GM12878 (cell line): ENCODE measurements at regions of chr22 and their contacts with region 1.

Region 1: DNA sequence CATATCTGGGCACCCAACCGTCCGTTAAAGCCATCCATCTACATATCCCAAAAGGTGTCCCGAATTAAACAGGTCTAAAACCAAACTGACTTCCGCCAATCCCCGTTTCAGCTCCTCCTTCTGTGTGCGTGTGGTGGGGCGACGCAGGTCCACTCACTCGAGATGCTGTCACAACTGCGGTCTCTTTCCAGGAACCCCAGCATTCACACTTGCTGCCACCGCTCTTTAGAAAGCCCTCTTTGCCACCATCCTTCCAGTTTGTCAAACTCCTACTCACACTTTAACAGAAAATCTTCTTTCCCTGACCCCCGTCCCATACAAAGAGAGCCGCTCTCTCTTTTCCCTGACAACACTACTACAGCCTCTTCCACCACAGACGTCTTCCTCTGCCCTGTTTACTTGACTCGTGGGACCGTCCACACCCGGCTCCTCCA is 467 bp downstream of the ESS2 start:
- DNase-seq: no peak
- ATAC-seq: peak; percentile 63
- H3K4me3 ChIP-seq: peak overlapping the region; percentile 100
- H3K27ac ChIP-seq: peak overlapping the region; percentile 72
- H3K4me1 ChIP-seq: peaks cover 4% of the 10 kb centered on the region
- H3K27me3 ChIP-seq: peaks cover 0 to 8% of the 10 kb centered on the region in 2 experiments; a peak in 3 of 4 replicates
- CTCF ChIP-seq: no peak
- EP300 ChIP-seq: no peak
- POLR2A ChIP-seq: no peak
- RAD21 ChIP-seq: no peak

Region 2: DNA sequence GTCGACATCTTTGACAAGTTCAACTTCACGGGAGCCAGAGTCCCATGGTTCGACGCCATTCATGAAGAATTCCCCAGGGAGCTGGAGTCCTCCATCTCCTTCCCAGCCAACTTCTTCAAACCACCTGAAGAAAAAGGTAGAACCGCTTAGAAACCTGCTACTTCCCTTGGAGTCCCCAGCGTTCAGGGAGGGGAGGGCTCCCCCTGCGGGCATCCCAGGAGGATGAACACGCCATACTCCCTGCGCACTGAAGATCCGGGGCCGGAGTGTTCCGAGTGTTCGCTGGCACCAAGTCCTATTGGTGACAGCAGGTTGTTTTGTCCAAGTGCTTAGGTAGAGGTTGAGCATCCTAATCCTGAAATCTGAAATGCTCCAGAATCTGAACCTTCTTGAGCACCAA is 156.2 kb before region 1 on chr22:
- CTCF ChIA-PET with region 1: no interaction called
- POLR2A ChIA-PET with region 1: no interaction called
- RAD21 ChIA-PET with region 1: no interaction called
- SMC1A ChIA-PET with region 1: no interaction called
- in situ Hi-C with region 1: no loop called
- intact Hi-C with region 1: no loop called
- DNase-seq: no peak
- ATAC-seq: no peak
- H3K4me3 ChIP-seq: no peak overlapping the region
- H3K27ac ChIP-seq: no peak overlapping the region
- H3K4me1 ChIP-seq: no peaks in the 10 kb centered on the region
- H3K27me3 ChIP-seq: no peaks in the 10 kb centered on the region
- CTCF ChIP-seq: no peak
- EP300 ChIP-seq: no peak
- POLR2A ChIP-seq: no peak
- RAD21 ChIP-seq: no peak

Region 3: DNA sequence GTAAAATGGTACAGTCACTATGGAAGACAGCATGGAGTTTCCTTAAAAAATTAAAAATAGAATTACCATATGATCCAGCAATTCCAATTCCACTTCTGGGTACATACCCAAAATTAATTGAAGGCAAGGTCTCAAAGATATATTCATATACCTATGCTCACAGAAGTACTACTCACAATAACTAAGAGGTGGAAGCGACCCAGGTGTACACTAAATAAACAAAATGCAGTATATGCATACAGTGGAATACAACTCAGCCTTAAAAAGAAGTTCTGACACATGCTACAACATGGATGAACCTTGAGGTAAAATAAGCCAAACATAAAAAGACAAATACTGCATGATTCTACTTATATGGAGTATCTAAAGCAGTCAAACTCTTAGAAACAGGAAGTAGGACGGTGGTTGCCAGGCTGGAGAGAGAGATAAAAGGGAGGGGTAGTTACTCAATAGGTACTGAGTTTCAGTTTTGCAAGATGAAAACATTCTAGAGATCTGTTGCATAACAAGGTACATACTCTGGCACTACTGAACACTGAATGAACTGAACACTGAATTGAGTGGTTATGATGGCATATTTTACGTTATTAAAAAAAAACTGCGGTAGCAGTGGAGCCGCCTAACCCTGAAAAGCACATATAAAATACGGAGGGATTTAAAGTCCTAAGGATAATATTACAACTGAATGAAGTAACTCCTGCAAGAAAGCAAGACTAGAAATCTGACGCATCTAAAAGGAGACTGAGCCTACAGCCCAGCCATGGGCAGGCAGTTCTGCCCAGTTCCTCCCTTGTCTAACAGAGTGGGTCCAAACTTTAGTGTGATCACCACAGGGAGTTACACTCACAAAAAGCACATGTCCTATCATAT is 34.6 kb before region 1 on chr22:
- CTCF ChIA-PET with region 1: interaction called, 19 read pairs
- POLR2A ChIA-PET with region 1: no interaction called
- RAD21 ChIA-PET with region 1: interaction called, 5 read pairs
- SMC1A ChIA-PET with region 1: no interaction called
- in situ Hi-C with region 1: no loop called
- intact Hi-C with region 1: loop called (anchors 2 kb)
- DNase-seq: peak; percentile 55
- ATAC-seq: peak; percentile 97
- H3K4me3 ChIP-seq: peak overlapping the region; percentile 6; the same call in 1 of the 2 replicates
- H3K27ac ChIP-seq: peak overlapping the region; percentile 38; the same call in 1 of the 2 replicates
- H3K4me1 ChIP-seq: peaks cover 15% of the 10 kb centered on the region
- H3K27me3 ChIP-seq: no peaks in the 10 kb centered on the region
- CTCF ChIP-seq: no peak
- EP300 ChIP-seq: no peak
- POLR2A ChIP-seq: no peak
- RAD21 ChIP-seq: no peak

Region 4: GRCh38 chr22:19115628-19116027 is 28.4 kb before region 1 on chr22:
- CTCF ChIA-PET with region 1: interaction called, 19 read pairs
- POLR2A ChIA-PET with region 1: interaction called, 7 read pairs
- RAD21 ChIA-PET with region 1: interaction called, 10 read pairs
- SMC1A ChIA-PET with region 1: interaction called, 7 read pairs
- in situ Hi-C with region 1: no loop called
- intact Hi-C with region 1: no loop called
- DNase-seq: no peak
- ATAC-seq: peak; percentile 75
- H3K4me3 ChIP-seq: no peak overlapping the region
- H3K27ac ChIP-seq: no peak overlapping the region
- H3K4me1 ChIP-seq: peaks cover 24% of the 10 kb centered on the region
- H3K27me3 ChIP-seq: no peaks in the 10 kb centered on the region
- CTCF ChIP-seq: peak; percentile 36 to 50 (median 46); a peak in 5 of 6 replicates
- EP300 ChIP-seq: no peak
- POLR2A ChIP-seq: no peak
- RAD21 ChIP-seq: no peak; the same call in 1 of the 2 replicates

Region 5: DNA sequence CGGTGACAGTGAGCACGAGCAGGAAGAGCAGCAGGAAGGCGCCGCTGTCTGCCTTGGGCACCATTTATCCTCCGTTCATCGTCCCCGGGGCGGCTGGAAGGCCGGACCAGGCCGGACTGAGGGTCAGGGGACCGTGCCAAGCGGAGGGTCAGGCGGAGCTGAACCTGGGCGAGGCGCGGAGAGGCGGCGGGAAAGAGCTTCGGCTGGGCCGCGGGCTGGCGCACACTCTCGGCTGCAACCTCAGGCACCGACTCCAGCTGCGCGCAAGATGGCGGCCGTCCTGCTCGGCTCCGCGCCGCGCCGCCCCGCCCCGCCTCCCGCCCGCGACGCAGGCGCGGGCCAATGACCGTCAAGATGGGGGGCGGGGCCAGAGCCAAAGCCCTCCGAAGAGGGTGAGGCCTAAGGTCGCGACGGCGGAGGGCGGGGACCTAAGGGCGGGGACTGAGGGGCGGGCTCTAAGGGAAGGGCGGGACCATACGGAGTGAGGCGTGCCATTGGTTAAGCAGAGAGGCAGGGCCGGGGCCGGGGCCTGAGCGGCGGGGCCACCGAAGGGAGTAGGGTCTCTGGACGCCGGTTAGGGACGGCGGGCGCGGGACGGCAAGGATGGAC is 21.7 kb before region 1 on chr22 and contains the start of gene DGCR2:
- CTCF ChIA-PET with region 1: interaction called, 10 read pairs
- POLR2A ChIA-PET with region 1: interaction called, 7 read pairs
- RAD21 ChIA-PET with region 1: interaction called, 10 read pairs
- SMC1A ChIA-PET with region 1: interaction called, 7 read pairs
- in situ Hi-C with region 1: no loop called
- intact Hi-C with region 1: loop called (anchors 1 kb)
- DNase-seq: peak; percentile 66
- ATAC-seq: peak; percentile 97
- H3K4me3 ChIP-seq: peak within 1 kb of the TSS; percentile 95
- H3K27ac ChIP-seq: peak within 1 kb of the TSS; percentile 67
- H3K4me1 ChIP-seq: peaks cover 24% of the 10 kb centered on the region
- H3K27me3 ChIP-seq: no peaks in the 10 kb centered on the region; a peak in 1 of 4 replicates
- CTCF ChIP-seq: no peak
- EP300 ChIP-seq: no peak
- POLR2A ChIP-seq: peak; percentile 91
- RAD21 ChIP-seq: no peak
- polyA plus RNA-seq, gene DGCR2: 0.19 to 0.44 TPM

Region 6: GRCh38 chr22:19432133-19432851 is 288.3 kb after region 1 on chr22 and contains the start of gene MRPL40:
- CTCF ChIA-PET with region 1: interaction called, 3 read pairs
- POLR2A ChIA-PET with region 1: no interaction called
- RAD21 ChIA-PET with region 1: no interaction called
- SMC1A ChIA-PET with region 1: no interaction called
- in situ Hi-C with region 1: no loop called
- intact Hi-C with region 1: loop called (anchors 1 kb)
- DNase-seq: peak; percentile 76
- ATAC-seq: peak; percentile 93
- H3K4me3 ChIP-seq: peak within 1 kb of the TSS; percentile 94
- H3K27ac ChIP-seq: peak within 1 kb of the TSS; percentile 93
- H3K4me1 ChIP-seq: no peaks in the 10 kb centered on the region
- H3K27me3 ChIP-seq: no peaks in the 10 kb centered on the region
- CTCF ChIP-seq: 0 out of 6 replicates have a peak, but pooled peaks of 1 of the 3 experiments have one; percentile 4
- EP300 ChIP-seq: peak in 1 of 2 experiments; percentile 16; a peak in 2 of 4 replicates
- POLR2A ChIP-seq: peak; percentile 93
- RAD21 ChIP-seq: no peak
- polyA plus RNA-seq, gene MRPL40: 180 to 207 TPM

Region 7: DNA sequence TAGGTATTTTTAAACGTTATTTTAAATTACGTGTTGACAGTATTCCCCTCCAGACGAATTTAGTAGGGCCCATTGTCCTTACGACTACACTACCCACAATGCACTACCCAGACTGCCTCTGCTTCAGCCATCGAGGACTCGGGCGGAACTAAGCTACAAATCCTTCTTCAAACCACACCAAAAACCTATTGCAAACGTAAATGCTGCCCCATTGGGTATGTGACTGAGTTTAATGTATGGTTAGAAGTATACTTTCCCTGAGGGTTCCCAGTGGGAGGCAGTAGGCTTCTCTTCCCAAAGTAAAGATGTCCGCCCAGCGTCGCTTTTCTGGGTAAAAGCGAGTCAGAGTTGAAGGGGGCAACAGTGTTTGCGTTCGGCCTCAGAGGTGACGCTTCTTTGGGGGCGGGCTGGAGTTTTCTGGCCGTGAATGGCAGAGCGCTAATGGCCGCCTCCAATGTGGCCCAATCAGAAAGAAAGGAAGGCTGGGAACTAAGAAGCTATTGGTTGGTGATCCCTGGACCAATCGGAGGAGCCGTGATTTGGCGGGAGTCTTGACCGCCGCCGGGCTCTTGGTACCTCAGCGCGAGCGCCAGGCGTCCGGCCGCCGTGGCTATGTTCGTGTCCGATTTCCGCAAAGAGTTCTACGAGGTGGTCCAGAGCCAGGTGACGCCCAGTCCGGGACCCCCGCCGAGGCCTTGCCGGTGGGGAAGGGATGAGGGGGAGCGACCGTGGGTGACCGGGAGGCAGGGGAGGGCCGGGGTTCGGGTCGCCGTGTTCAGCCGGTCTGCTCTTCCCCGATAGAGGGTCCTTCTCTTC is 335.6 kb after region 1 on chr22 and contains the start of gene CDC45:
- CTCF ChIA-PET with region 1: interaction called, 11 read pairs
- POLR2A ChIA-PET with region 1: no interaction called
- RAD21 ChIA-PET with region 1: interaction called, 25 read pairs
- SMC1A ChIA-PET with region 1: interaction called, 8 read pairs
- in situ Hi-C with region 1: no loop called
- intact Hi-C with region 1: no loop called
- DNase-seq: peak; percentile 93
- ATAC-seq: peak; percentile 95
- H3K4me3 ChIP-seq: peak within 1 kb of the TSS; percentile 97
- H3K27ac ChIP-seq: peak within 1 kb of the TSS; percentile 97
- H3K4me1 ChIP-seq: no peaks in the 10 kb centered on the region
- H3K27me3 ChIP-seq: no peaks in the 10 kb centered on the region
- CTCF ChIP-seq: no peak
- EP300 ChIP-seq: no peak
- POLR2A ChIP-seq: peak; percentile 80
- RAD21 ChIP-seq: no peak
- polyA plus RNA-seq, gene CDC45: 42.8 to 51.2 TPM